OCI-LY7 (cell line): ENCODE measurements at regions of chr6 and their contacts with region 1.

Region 1: DNA sequence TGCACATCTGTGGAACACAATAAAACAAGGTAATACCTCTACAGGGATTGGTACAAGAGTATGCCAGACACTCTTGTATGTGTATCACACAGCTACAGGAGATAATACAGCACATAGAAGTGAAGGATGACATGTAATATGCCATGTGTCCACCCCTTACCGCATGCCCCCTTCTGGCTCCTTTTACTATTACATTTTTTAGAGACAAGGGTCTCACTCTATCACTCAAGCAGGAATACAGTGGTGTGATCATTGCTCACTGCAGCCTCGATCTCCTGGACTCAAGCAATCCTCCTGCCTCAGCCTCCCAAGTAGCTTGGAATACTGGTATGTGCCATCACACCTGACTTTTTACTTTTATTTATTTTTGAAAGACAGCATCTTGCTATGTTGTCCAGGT is 4.2 kb upstream of the NCR3 start:
- DNase-seq: peak; percentile 82
- H3K4me3 ChIP-seq: no peak overlapping the region
- H3K27ac ChIP-seq: no peak overlapping the region
- H3K4me1 ChIP-seq: peaks cover 29% of the 10 kb centered on the region
- CTCF ChIP-seq: peak; percentile 84

Region 2: DNA sequence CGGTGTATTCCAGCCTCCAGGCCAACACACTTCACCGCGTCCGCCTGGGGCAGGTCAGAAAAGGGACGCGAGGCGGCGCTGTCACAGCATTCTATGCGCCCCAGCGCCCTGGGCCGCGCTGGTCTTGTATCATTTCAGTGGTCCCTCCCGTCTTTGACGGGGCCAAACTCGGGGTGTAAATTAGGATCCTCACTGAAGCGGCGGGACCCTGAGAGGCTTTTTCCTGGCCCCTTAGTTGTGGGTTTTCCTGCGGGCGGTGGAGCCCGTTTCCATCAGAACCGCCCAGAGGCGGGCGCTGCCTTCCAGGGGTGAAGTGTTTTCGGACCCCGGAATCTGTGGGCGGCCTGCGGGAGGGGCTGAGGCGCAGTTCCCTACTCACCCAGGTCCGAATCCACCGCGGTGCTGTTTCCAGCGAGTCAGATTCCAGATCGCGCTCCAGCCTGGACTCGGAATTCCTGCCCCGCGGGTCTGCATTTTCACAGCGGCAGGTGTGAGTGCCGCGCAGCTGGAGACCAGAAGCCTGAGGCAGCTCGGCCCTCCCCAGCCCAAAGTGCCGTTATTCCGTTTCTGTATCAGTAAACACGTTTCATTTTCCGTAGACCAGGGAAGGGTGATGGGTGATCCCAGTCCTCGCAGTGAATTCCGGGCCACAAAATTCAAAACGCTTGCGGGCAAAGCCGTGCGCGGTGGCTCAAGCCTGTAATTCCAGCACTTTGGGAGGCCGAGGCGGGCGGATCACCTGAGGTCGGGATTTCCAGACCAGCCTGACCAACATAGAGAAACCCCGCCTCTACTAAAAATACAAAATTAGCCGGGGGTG is 102.9 kb before region 1 on chr6:
- CTCF ChIA-PET with region 1: interaction called, 3 read pairs
- POLR2A ChIA-PET with region 1: interaction called, 7 read pairs
- intact Hi-C with region 1: loop called (anchors 1 kb)
- DNase-seq: peak; percentile 88
- H3K4me3 ChIP-seq: peak overlapping the region; percentile 82
- H3K27ac ChIP-seq: peak overlapping the region; percentile 78
- H3K4me1 ChIP-seq: peaks cover 35% of the 10 kb centered on the region
- CTCF ChIP-seq: peak; percentile 95

Region 3: GRCh38 chr6:31580807-31581433 is 16.1 kb before region 1 on chr6:
- CTCF ChIA-PET with region 1: interaction called, 27 read pairs
- POLR2A ChIA-PET with region 1: interaction called, 49 read pairs
- intact Hi-C with region 1: loop called (anchors 1 kb)
- DNase-seq: peak; percentile 89
- H3K4me3 ChIP-seq: peak overlapping the region; percentile 87
- H3K27ac ChIP-seq: peak overlapping the region; percentile 86
- H3K4me1 ChIP-seq: peaks cover 78% of the 10 kb centered on the region
- CTCF ChIP-seq: peak; percentile 93

Region 4: DNA sequence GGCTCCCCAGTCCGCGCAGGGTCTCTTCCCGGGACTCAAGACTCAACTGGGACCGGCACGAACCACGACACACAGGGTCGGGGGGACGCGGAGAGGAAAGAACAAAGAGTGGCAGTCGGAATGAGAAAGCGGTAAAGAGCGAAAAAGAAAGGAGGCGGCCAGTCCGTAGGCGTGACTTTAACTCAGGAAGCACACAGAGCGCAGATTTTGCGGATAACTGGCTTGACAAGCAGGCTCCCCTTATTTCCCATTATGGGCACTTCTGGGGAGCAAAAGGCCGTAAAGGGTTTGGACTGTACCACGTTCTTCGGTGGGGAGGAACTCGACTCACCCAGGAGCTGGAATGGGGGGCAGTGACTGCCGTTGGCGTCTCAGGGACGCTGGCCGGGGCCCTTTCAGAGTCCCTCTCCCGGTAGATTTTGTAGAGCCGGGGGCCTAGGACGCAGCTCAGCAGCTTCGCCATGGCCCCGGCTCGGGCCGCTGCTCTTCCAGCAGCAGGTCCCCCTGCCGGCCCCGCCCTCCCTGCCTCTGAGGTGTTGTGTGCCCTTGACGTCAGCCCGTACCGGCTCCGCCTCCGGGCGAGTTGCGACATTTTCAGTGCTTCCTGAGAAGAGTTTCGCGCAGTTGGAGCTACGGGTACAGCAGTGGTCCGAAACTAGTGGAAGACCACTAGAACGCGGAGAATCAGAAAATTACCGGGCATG is 106.0 kb after region 1 on chr6 and contains the start of gene ABHD16A:
- CTCF ChIA-PET with region 1: no interaction called
- POLR2A ChIA-PET with region 1: no interaction called
- intact Hi-C with region 1: no loop called
- DNase-seq: peak; percentile 99
- H3K4me3 ChIP-seq: peak within 1 kb of the TSS; percentile 78
- H3K27ac ChIP-seq: peak within 1 kb of the TSS; percentile 74
- H3K4me1 ChIP-seq: peaks cover 20% of the 10 kb centered on the region
- CTCF ChIP-seq: no peak
- total RNA-seq, gene ABHD16A: 28.6 and 34.8 TPM in 2 replicates

Region 5: GRCh38 chr6:31739639-31740396 is 142.8 kb after region 1 on chr6 and contains the start of gene MSH5:
- CTCF ChIA-PET with region 1: no interaction called
- POLR2A ChIA-PET with region 1: no interaction called
- intact Hi-C with region 1: no loop called
- DNase-seq: peak; percentile 100
- H3K4me3 ChIP-seq: peak within 1 kb of the TSS; percentile 79
- H3K27ac ChIP-seq: peak within 1 kb of the TSS; percentile 93
- H3K4me1 ChIP-seq: peaks cover 50% of the 10 kb centered on the region
- CTCF ChIP-seq: no peak
- total RNA-seq, gene MSH5: 104 and 108 TPM in 2 replicates

Region 6: DNA sequence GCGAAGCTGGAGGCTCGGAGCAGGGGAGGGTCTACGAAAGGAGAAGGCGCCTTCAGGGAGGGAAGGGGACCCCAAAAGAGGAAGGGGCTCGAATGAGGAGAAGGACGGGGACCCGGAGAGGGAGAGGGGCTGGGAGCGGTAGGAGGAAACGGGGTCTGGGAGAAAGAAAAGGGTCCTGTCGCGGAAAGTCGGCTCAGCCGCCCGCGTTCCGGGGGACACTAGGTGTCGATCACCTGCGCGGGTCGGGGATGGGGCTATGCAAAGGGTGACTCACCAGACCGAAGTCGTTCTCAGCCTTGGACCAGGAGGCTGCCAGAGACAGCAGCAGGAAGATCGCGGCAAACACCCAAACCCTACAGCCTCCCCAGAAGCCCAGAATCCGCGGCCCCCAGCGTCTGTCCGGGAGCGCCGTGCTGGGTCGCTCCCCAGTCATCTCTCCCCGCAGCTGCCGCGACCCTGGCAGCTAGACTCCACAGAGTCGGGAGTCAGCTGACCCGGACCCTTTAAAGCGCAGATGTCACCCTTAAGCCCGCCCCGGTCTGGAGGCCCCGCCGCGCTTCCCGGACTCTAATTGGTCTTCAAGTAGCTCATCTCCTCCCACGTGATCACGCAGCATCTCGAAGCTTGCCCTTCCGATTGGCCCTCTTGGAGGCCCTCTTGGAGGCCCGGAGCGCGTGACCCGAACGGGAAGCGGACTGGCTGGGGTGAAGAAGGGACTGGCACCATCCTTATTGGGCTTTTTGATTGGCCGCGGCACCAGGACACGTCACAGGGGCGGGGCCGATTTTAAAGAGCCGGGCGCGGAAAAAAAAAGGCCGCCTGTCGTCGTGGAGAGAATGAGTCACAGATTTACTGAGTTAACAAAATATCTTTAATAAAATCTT is 265.6 kb after region 1 on chr6 and contains the start of gene NEU1:
- CTCF ChIA-PET with region 1: no interaction called
- POLR2A ChIA-PET with region 1: no interaction called
- intact Hi-C with region 1: no loop called
- DNase-seq: peak; percentile 100
- H3K4me3 ChIP-seq: peak within 1 kb of the TSS; percentile 75
- H3K27ac ChIP-seq: peak within 1 kb of the TSS; percentile 74
- H3K4me1 ChIP-seq: peaks cover 20% of the 10 kb centered on the region
- CTCF ChIP-seq: no peak
- total RNA-seq, gene NEU1: 5.5 and 7.0 TPM in 2 replicates

Region 7: DNA sequence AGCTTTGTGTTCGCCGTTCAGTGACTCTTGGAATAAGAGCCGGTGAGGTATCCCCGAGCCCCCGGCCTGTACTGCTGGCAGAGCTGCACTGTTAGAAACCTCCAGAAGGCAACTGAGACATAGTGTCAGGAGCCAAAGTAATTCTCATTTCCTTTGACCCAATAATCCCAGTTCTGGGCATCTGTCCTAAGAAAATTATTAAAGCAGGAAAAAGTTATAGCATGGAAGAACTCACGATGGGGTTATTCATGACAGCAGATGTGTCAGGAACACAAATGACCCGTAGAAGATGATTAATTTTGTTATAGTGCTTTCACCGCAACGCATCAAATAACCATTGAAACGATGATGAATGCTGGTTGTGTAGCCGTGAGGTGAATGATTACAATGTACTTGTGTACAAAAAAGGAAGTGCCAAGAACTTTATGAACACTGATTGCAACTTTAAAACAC is 461.5 kb after region 1 on chr6:
- CTCF ChIA-PET with region 1: no interaction called
- POLR2A ChIA-PET with region 1: no interaction called
- intact Hi-C with region 1: no loop called
- DNase-seq: no peak
- H3K4me3 ChIP-seq: no peak overlapping the region
- H3K27ac ChIP-seq: no peak overlapping the region
- H3K4me1 ChIP-seq: no peaks in the 10 kb centered on the region
- CTCF ChIP-seq: no peak